ENCODE measurements at regions of chr4 and their contacts with region 1.

Region 1: DNA sequence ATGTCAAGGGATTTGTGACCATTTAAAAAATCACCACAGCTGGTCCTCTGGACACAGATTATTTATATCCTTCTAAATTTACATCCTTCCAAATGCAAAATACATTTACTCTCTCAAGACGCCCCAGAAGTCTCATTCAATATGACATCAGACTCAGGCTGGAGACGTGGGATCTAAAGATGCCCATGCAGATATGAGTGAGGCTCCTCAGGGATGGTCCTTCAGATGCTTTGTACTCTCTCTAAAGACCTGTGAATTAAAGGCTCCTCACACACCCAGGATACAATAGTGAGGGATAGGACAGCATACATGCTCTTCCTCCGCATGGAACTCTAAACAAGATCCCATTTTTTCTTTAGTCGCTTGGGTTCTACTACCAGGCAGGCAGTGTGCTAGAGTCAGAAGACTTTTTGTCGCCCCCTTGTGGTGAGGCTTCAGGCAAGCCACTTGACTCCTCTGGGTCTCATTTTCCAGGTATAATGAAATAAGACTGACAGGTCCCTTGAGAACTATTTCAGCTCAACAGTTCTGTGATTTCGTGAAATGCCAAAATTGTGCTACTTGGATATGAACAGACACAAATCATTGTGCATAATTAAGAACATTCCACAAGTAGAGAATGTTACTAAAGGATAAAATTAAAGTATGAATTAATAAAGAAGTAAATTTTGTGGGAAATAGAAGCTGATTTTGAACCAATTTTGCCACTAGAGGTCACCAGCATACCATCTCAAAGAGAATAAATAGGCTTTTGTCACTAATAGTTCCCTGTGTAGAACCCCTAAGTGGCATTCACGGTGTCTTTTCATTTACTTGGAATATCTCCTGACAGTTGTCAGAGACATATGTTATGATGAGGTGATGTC is 13.7 kb upstream of the SCOC start:
- DNase-seq: peak; percentile 25 to 82 (median 62)
- H3K4me3 ChIP-seq: no peak overlapping the region
- H3K27ac ChIP-seq: no peak overlapping the region
- H3K27me3 ChIP-seq: no peaks in the 10 kb centered on the region
- CTCF ChIP-seq: peak; percentile 52 to 91 (median 78)

Region 2: GRCh38 chr4:140116442-140117104 is 243.2 kb before region 1 on chr4:
- intact Hi-C with region 1: no loop called
- DNase-seq: no peak
- H3K4me3 ChIP-seq: no peak overlapping the region
- H3K27ac ChIP-seq: no peak overlapping the region
- H3K27me3 ChIP-seq: no peaks in the 10 kb centered on the region
- CTCF ChIP-seq: no peak

Region 3: GRCh38 chr4:140281828-140282552 is 77.8 kb before region 1 on chr4:
- intact Hi-C with region 1: no loop called
- DNase-seq: no peak
- H3K4me3 ChIP-seq: no peak overlapping the region
- H3K27ac ChIP-seq: no peak overlapping the region
- H3K27me3 ChIP-seq: peaks cover 0 to 6% (median 0%) of the 10 kb centered on the region in 45 donors
- CTCF ChIP-seq: peak in 1 of 56 donors; percentile 14

Region 4: GRCh38 chr4:140296335-140297220 is 63.2 kb before region 1 on chr4:
- intact Hi-C with region 1: no loop called
- DNase-seq: peak in 4 of 10 donors; percentile 25 to 70 (median 36)
- H3K4me3 ChIP-seq: peak overlapping the region in 29 of 59 donors; percentile 1 to 44 (median 16)
- H3K27ac ChIP-seq: peak overlapping the region in 13 of 59 donors; percentile 0 to 77 (median 16)
- H3K27me3 ChIP-seq: no peaks in the 10 kb centered on the region
- CTCF ChIP-seq: no peak

Region 5: DNA sequence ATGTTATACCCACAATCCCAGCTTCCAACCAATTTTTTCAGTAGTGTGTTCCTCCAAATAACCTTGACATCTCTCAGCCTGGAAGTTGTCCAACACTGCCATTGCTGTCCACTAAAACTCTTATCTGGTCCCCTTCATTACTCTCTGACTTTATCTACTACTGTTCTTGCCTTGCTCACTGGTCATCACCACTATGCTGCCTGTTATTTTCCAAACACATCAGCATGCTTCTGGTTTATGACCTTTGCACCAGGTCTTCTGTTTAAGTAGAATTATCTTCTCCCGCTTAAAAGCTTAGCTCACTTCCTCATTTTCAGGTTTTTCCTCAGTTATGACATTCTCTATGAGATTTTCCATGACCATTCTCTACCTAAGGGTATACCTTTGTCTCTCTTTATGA is 169.6 kb after region 1 on chr4:
- intact Hi-C with region 1: loop called in 1 of 2 experiments (anchors 5 kb)
- DNase-seq: no peak
- H3K4me3 ChIP-seq: no peak overlapping the region
- H3K27ac ChIP-seq: no peak overlapping the region
- H3K27me3 ChIP-seq: no peaks in the 10 kb centered on the region
- CTCF ChIP-seq: no peak

Region 6: DNA sequence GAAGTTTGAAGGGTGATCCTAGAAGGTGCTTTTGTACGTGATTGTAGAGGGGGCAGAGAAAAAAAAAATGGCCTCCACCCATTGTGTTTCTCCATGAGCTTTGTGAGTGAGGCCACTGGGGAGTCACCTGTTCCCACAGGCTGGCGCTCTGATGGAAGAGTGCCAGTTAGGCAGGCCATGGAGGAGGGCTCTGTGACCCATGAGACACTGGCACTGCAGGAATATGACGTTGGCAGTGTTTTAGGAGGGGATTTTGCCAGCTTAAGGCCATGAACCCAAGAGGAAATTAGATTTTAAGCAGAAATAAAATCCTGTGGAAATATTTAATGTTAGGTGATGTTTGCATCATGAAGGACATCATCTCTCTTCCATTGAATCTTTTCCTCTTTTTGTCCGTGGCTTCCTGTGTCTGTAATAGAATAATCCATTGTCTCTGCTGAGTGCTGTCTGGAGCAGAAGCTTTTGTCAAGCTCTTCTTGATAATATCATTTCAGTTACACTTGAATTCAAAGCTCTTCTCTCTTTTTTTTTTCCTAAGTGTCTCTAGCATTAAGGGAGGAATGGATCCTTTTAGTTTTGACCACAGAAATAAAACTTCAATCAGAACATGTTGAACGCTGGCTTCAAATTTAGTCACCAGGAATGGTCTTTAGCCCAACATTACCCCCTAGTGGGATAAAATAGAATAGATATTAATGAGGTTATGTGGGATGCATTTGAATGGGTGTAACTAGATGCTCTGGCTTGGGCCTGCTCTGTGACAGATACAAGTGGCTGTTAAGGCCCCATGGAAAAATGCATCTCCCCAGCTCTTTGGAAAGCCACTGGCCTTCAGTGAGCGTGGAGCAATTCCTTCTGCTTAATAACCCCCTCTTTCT is 250.0 kb after region 1 on chr4:
- intact Hi-C with region 1: loop called (anchors 5 kb)
- DNase-seq: no peak
- H3K4me3 ChIP-seq: peak overlapping the region in 19 of 59 donors; percentile 0 to 35 (median 10)
- H3K27ac ChIP-seq: peak overlapping the region in 1 of 59 donors; percentile 39
- H3K27me3 ChIP-seq: peaks cover 0 to 7% (median 0%) of the 10 kb centered on the region in 45 donors
- CTCF ChIP-seq: peak; percentile 31 to 84 (median 60)

Region 7: GRCh38 chr4:140851032-140851636 is 491.3 kb after region 1 on chr4:
- intact Hi-C with region 1: loop called (anchors 5 to 10 kb)
- DNase-seq: peak in 2 of 10 donors; percentile 43 to 63
- H3K4me3 ChIP-seq: no peak overlapping the region
- H3K27ac ChIP-seq: no peak overlapping the region
- H3K27me3 ChIP-seq: peaks cover 0 to 15% (median 0%) of the 10 kb centered on the region in 45 donors
- CTCF ChIP-seq: peak; percentile 70 to 97 (median 82)

Region 8: GRCh38 chr4:141058739-141059512 is 699.1 kb after region 1 on chr4:
- intact Hi-C with region 1: no loop called
- DNase-seq: no peak
- H3K4me3 ChIP-seq: no peak overlapping the region
- H3K27ac ChIP-seq: no peak overlapping the region
- H3K27me3 ChIP-seq: no peaks in the 10 kb centered on the region
- CTCF ChIP-seq: no peak